Colonic mucosa (tissue), 4 donors: ENCODE measurements at regions of chr11 and their contacts with region 1.

Region 1: DNA sequence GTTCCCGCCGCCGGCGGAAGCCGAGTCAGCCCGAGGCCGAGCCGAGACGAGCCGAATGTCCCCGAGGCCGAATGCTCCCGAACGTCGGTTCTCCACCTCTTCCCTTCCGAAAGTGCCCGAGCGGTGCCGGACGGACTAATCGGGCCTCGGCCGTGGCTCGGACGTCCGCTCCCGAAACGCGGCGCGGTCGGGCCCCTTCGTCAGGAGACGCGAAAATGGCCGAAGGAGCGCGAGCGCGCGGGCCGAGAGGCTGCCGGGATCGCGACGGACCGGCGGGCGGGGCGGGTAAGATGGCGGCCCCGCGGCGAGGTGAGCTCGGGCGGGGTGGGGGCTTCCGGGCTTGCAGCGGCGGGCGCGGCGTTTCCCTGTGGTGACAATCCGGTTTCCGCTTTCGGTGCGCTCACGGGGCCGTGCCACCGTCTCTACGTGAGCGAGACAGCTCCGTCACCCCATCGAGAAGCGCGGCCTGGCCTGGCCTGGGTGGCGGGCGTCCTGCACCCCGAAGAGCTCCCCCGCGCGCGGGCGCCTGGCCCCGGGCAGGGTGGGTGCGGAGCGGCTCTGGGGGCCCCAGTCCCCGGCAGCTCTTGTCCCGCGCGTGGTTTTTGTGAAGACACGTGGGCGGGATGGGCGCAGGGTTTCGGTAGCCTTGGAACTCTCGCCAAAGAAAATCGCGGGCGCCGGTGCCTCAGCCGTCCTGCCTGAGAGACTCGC is at the start of gene TMEM80:
- DNase-seq: peak; percentile 99
- H3K4me3 ChIP-seq: peak within 1 kb of the TSS; percentile 82
- H3K27ac ChIP-seq: peak within 1 kb of the TSS; percentile 100
- H3K4me1 ChIP-seq: peaks cover 19% of the 10 kb centered on the region
- H3K27me3 ChIP-seq: no peaks in the 10 kb centered on the region
- CTCF ChIP-seq: no peak
- total RNA-seq, gene TMEM80: 18.4 to 36.6 TPM

Region 2: GRCh38 chr11:719214-720016 is 23.7 kb after region 1 on chr11:
- intact Hi-C with region 1: loop called (anchors 2 kb)
- DNase-seq: peak; percentile 26
- H3K4me3 ChIP-seq: no peak overlapping the region
- H3K27ac ChIP-seq: no peak overlapping the region
- H3K4me1 ChIP-seq: peaks cover 18% of the 10 kb centered on the region
- H3K27me3 ChIP-seq: no peaks in the 10 kb centered on the region
- CTCF ChIP-seq: no peak

Region 3: GRCh38 chr11:914747-915501 is 219.2 kb after region 1 on chr11:
- intact Hi-C with region 1: no loop called
- DNase-seq: peak; percentile 38
- H3K4me3 ChIP-seq: no peak overlapping the region
- H3K27ac ChIP-seq: no peak overlapping the region
- H3K4me1 ChIP-seq: no peaks in the 10 kb centered on the region
- H3K27me3 ChIP-seq: no peaks in the 10 kb centered on the region
- CTCF ChIP-seq: no peak